BJ (cell line): ENCODE measurements at regions of chr3 and their contacts with region 1.

Region 1: DNA sequence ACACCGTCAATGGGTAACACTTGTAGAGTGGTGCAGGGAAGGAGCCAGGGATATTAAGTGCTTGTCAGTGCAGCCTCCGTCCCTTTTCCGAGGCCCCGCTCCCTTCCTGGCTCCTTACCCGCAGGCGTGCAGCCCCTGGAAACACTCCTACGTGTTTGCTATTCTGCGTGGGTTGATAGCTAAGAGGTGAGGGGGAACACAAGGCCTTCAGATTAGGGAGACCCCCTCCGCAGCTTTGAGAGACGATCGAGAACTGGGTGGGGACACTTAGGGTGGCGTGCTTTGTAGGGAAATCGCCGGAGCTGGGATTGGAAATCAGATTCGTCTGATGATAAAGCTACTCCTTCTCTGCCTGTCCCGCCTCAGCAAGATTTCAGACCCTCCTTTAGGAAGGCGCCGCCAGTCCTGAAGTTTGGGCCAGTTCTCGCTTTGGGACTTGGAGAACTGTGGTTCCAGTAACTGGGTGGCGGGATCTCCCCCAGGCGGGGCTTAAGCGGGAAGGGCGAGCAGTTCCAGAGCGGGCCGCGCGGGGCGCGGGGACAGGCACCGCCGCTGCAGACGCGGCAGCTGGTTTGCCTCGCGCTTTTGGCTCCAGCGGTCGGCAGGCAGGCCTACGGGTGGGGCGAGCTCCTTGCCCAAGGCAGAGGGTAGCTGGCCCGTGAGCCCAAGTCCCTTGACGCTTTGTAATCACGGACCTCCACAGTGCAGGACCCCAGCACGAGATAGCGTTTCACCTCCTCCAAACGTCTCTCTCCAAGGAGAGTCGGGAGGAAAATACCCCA is 8.0 kb upstream of the FAM107A start:
- DNase-seq: no peak
- H3K4me3 ChIP-seq: peak overlapping the region; percentile 31
- H3K27me3 ChIP-seq: peaks cover 13% of the 10 kb centered on the region
- CTCF ChIP-seq: peak; percentile 82

Region 2: DNA sequence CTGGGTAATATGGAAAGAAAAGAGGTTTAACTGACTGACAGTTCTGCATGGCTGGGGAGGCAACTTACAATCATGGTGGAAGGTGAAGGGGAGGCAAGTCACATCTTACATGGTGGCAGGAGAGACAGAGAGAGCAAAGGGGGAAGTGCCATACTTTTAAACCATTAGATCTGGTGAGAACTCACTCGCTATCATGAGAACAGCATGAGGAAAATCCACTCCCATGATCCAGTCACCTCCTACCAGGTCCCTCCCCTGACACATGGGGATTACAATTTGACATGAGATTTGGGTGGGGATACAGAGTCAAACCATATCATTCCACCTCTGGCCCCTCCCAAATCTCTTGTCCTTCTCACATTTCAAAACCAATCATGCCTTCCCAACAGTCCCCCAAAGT is 32.2 kb before region 1 on chr3:
- CTCF ChIA-PET with region 1: no interaction called
- POLR2A ChIA-PET with region 1: no interaction called
- DNase-seq: no peak
- H3K4me3 ChIP-seq: no peak overlapping the region
- H3K27me3 ChIP-seq: no peaks in the 10 kb centered on the region
- CTCF ChIP-seq: no peak

Region 3: GRCh38 chr3:58568572-58569286 is 16.5 kb before region 1 on chr3:
- CTCF ChIA-PET with region 1: interaction called, 18 read pairs
- POLR2A ChIA-PET with region 1: no interaction called
- DNase-seq: no peak
- H3K4me3 ChIP-seq: no peak overlapping the region
- H3K27me3 ChIP-seq: no peaks in the 10 kb centered on the region
- CTCF ChIP-seq: peak; percentile 85

Region 4: GRCh38 chr3:58596834-58597518 is 11.8 kb after region 1 on chr3:
- CTCF ChIA-PET with region 1: interaction called, 12 read pairs
- POLR2A ChIA-PET with region 1: no interaction called
- DNase-seq: no peak
- H3K4me3 ChIP-seq: no peak overlapping the region
- H3K27me3 ChIP-seq: no peaks in the 10 kb centered on the region; the same call in 1 of the 2 replicates
- CTCF ChIP-seq: no peak

Region 5: DNA sequence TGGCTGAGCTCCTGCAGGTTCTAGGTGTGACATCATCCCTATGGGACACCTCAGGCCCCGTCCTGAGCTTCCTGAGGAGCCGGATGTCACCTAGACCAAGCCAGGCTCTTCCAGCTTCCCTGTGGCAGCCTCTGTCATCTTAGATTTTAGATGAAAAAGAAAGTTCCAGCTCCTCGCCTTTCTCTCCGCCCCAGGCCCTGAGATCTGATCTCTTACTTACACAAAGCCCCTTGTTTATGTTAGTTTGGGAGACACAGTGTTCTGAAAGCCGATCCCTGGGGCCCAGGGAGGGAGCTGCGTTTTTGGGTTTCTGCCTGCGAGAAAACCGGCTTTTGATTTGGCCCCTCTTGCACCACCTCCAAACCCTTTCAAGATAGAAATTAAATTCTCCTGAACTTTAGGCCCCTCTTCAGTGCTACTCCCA is 32.2 kb after region 1 on chr3:
- CTCF ChIA-PET with region 1: interaction called, 12 read pairs
- POLR2A ChIA-PET with region 1: no interaction called
- DNase-seq: no peak
- H3K4me3 ChIP-seq: no peak overlapping the region
- H3K27me3 ChIP-seq: peaks cover 2% of the 10 kb centered on the region; the same call in 1 of the 2 replicates
- CTCF ChIP-seq: no peak

Region 6: GRCh38 chr3:58630076-58630709 is 45.0 kb after region 1 on chr3:
- CTCF ChIA-PET with region 1: interaction called, 34 read pairs
- POLR2A ChIA-PET with region 1: no interaction called
- DNase-seq: no peak
- H3K4me3 ChIP-seq: no peak overlapping the region
- H3K27me3 ChIP-seq: no peaks in the 10 kb centered on the region
- CTCF ChIP-seq: peak; percentile 86